Right lobe of liver (tissue), 6 donors: ENCODE measurements at regions of chr7 and their contacts with region 1.

Region 1: DNA sequence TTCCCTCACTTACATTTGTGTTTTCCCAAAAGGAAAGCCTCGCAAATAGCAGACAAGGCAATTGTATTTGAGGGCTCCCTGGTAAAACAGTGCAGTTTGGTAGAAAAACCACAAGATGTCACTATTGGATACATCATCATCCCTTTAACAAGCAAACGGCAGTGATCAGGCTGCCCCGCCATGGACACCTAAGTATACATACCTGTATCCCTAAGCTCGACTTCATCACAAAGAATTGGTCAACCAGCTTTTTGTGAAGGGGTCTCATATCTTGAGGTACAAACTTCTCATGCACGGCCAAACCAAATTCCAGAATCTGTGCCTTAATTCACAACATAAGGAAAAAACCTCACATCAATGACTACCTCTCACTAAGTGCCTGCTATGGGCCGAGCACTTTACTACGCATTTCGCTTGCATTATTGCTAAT is 179.5 kb upstream of the IMMP2L start:
- DNase-seq: peak in 1 of 3 donors; percentile 51
- ATAC-seq: peak; percentile 84 to 87 (median 86)
- H3K4me3 ChIP-seq: no peak overlapping the region
- H3K27ac ChIP-seq: no peak overlapping the region
- H3K4me1 ChIP-seq: peaks cover 0 to 18% (median 0%) of the 10 kb centered on the region in 4 donors
- H3K27me3 ChIP-seq: no peaks in the 10 kb centered on the region
- CTCF ChIP-seq: peak; percentile 56 to 69 (median 61)
- POLR2A ChIP-seq: no peak

Region 2: DNA sequence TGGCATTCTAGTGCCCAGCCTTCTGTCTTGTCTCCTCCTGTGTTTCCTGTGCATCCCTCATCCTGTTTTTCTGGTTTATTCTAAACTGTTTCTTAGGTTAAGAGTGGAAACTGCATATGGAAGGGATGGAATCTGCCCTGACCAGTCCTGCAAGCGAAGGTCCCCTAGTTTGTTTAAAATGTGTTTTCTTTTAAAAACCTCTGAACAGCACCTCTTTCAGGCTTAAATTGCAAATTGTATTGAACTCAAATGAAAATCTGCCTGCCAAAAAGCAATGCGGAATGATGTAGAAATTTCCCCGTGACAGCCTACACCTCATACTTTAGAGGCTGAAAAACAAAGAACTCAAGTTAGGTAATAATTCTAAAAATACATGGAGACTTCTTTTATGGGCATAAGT is 43.2 kb after region 1 on chr7:
- intact Hi-C with region 1: no loop called
- DNase-seq: no peak
- ATAC-seq: no peak
- H3K4me3 ChIP-seq: no peak overlapping the region
- H3K27ac ChIP-seq: no peak overlapping the region
- H3K4me1 ChIP-seq: no peaks in the 10 kb centered on the region
- H3K27me3 ChIP-seq: no peaks in the 10 kb centered on the region
- CTCF ChIP-seq: no peak
- POLR2A ChIP-seq: no peak

Region 3: DNA sequence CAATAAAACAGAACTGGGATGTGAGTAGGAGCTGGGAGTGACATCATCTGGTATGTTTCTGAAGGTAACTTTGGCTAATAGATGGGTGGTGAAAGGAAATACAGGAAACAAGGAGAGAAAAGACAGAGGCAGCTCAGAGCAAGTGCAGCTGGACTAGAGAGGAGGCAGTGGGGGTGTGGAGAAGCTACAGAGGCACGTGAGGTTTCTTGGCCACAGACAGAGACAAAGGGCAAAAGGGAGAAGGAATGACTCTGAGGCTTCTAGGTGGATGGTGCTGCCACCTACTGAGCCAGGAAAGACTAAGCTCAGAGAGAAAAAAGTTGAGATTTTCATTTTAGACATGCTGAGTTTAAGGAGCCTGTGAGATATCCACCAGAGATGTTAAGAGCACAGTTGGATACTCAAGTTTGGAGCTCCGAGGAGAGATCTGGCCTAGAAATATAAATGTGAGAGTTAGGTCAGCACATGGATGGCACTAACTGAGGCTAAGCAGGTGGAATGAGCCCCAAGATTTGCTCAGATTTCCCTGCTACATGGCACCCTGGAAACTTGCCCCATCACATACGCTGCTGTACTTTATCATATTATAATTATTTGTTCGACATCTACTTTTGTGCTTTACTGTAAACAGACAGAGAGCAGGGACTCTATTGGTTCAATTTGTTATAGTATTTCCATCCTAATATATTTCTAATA is 113.5 kb after region 1 on chr7:
- intact Hi-C with region 1: loop called in 1 of 2 experiments (anchors 10 kb)
- DNase-seq: no peak
- ATAC-seq: peak; percentile 63 to 85 (median 72)
- H3K4me3 ChIP-seq: no peak overlapping the region
- H3K27ac ChIP-seq: no peak overlapping the region
- H3K4me1 ChIP-seq: no peaks in the 10 kb centered on the region
- H3K27me3 ChIP-seq: no peaks in the 10 kb centered on the region
- CTCF ChIP-seq: peak; percentile 19 to 54 (median 40)
- POLR2A ChIP-seq: no peak